ENCODE measurements at regions of chr15 and their contacts with region 1.

Region 1: GRCh38 chr15:66700802-66701421 is 1.1 kb upstream of the SMAD6 start:
- DNase-seq: peak; percentile 92 to 98
- ATAC-seq: peak; percentile 62 to 73
- H3K4me3 ChIP-seq: peak overlapping the region; percentile 90
- H3K27ac ChIP-seq: peak overlapping the region; percentile 95
- H3K4me1 ChIP-seq: peaks cover 35% of the 10 kb centered on the region
- CTCF ChIP-seq: no peak
- EP300 ChIP-seq: peak in 1 of 2 experiments; percentile 58; a peak in 1 of 5 replicates
- POLR2A ChIP-seq: peak; percentile 62
- RAD21 ChIP-seq: peak in 1 of 2 experiments; percentile 26; a peak in 2 of 5 replicates

Region 2: GRCh38 chr15:66611257-66612053 is 89.5 kb before region 1 on chr15:
- CTCF ChIA-PET with region 1: interaction called, 98 read pairs
- POLR2A ChIA-PET with region 1: no interaction called
- DNase-seq: no peak
- ATAC-seq: peak; percentile 26 to 50; a peak in 2 of 6 replicates
- H3K4me3 ChIP-seq: no peak overlapping the region
- H3K27ac ChIP-seq: no peak overlapping the region
- H3K4me1 ChIP-seq: no peaks in the 10 kb centered on the region
- CTCF ChIP-seq: no peak
- EP300 ChIP-seq: no peak
- POLR2A ChIP-seq: no peak
- RAD21 ChIP-seq: no peak

Region 3: DNA sequence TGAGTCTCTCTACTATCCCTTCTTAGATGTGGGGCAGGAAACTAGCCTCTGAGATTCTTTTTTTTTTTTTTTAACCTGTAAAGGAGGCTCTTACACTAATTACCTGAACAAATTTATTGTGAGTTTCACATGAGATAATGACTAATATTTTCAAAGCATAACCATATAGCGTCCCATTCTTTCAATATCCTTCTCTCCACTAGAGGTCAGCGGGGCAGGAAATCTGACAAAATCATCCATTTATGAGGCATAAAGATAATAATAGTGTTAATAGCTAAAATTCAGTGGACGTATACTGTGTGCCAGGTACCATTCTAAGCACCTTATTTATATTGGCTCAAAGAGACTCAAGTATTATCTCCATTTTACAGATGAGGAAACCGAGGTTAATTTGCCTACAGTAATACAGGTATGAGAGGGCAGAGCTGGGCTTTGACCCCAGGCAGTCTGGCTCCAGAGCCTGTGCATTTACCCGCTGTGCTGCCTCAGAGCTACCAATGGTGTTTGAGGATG is 15.2 kb before region 1 on chr15:
- CTCF ChIA-PET with region 1: interaction called, 94 read pairs
- POLR2A ChIA-PET with region 1: interaction called, 5 read pairs
- DNase-seq: no peak
- ATAC-seq: peak; percentile 51 to 78; a peak in 4 of 6 replicates
- H3K4me3 ChIP-seq: no peak overlapping the region
- H3K27ac ChIP-seq: no peak overlapping the region
- H3K4me1 ChIP-seq: no peaks in the 10 kb centered on the region
- CTCF ChIP-seq: peak; percentile 58
- EP300 ChIP-seq: no peak
- POLR2A ChIP-seq: no peak
- RAD21 ChIP-seq: peak; percentile 44

Region 4: DNA sequence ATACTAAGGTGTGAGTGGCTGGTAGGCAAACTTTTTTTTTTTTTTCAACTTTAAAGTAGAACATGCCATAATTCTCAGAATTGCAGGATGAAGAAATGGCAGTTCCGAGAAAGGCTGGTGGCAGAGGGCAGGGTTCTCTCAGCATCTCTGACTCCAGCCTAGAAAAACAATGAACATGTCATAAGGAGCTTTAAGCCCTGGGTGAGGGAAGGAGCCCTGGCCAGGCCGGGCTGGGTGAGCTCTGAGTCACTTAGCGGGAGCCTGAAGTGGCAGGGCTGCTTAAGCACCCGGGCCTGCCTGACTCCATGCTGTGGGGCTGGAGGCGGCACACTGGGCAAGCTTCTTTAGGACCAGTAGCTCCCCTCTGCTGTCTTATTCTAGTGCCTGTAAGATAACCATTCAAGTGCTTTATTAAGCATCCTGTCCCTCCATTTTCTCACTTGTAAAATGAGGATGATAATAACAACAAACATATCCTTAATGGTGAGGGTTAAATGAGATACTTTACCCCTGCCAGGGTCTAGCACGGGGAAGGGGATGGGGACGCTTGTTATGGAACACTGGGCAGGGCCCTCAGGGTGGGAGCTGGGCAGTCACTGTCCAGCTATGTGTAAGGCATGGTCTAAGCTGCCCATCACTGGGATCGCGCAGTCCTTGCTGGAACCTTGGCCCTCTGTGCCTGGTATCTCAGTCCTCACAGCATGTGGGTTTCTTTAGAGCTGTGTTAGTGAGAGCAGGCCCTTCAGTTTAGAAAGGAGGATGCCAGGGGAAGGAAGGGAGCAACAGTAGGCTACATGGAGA is 19.5 kb after region 1 on chr15:
- CTCF ChIA-PET with region 1: interaction called, 182 read pairs
- POLR2A ChIA-PET with region 1: interaction called, 14 read pairs
- DNase-seq: peak in 1 of 2 experiments; percentile 44
- ATAC-seq: peak; percentile 51 to 59; a peak in 5 of 6 replicates
- H3K4me3 ChIP-seq: no peak overlapping the region
- H3K27ac ChIP-seq: peak overlapping the region in 1 of 2 experiments; percentile 46; a peak in 3 of 6 replicates
- H3K4me1 ChIP-seq: peaks cover 91% of the 10 kb centered on the region
- CTCF ChIP-seq: no peak
- EP300 ChIP-seq: no peak
- POLR2A ChIP-seq: no peak
- RAD21 ChIP-seq: no peak

Region 5: GRCh38 chr15:66789029-66790025 is 88.4 kb after region 1 on chr15:
- CTCF ChIA-PET with region 1: interaction called, 11 read pairs
- POLR2A ChIA-PET with region 1: interaction called, 5 read pairs
- DNase-seq: peak in 1 of 2 experiments; percentile 77
- ATAC-seq: peak; percentile 83
- H3K4me3 ChIP-seq: no peak overlapping the region
- H3K27ac ChIP-seq: 0 out of 6 replicates have a peak overlapping the region, but pooled peaks of 1 of the 2 experiments have one; percentile 6
- H3K4me1 ChIP-seq: peaks cover 19% of the 10 kb centered on the region; the same call in 2 of the 3 replicates
- CTCF ChIP-seq: peak; percentile 66
- EP300 ChIP-seq: no peak
- POLR2A ChIP-seq: no peak
- RAD21 ChIP-seq: peak; percentile 72 to 73

Measured in A549 (cell line).